ENCODE measurements at regions of chr17 and their contacts with region 1.

Region 1: DNA sequence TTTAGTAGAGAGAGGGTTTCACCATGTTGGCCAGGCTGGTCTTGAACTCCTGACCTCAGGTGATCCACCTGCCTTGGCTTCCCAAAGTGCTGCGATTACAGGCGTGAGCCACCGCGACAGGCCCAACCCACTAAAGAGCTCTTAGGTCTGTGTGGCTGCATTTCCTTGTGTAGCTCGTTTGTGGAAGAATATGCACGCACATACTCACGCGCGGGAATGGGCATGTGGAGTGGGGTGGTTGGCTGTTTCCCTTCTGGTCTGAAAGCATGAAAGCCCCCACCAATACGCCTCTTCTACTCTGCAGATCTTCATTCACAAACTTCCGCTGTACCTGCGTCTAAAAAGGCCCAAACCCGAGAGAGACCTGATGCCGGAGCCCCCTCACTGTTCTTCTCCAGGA is 10.1 kb downstream of the CHRNB1 start:
- DNase-seq: no peak
- H3K4me3 ChIP-seq: peak overlapping the region in 2 of 3 experiments; percentile 60 to 61
- H3K27ac ChIP-seq: no peak overlapping the region
- H3K4me1 ChIP-seq: peaks cover 20% of the 10 kb centered on the region
- H3K27me3 ChIP-seq: no peaks in the 10 kb centered on the region
- CTCF ChIP-seq: no peak

Region 2: DNA sequence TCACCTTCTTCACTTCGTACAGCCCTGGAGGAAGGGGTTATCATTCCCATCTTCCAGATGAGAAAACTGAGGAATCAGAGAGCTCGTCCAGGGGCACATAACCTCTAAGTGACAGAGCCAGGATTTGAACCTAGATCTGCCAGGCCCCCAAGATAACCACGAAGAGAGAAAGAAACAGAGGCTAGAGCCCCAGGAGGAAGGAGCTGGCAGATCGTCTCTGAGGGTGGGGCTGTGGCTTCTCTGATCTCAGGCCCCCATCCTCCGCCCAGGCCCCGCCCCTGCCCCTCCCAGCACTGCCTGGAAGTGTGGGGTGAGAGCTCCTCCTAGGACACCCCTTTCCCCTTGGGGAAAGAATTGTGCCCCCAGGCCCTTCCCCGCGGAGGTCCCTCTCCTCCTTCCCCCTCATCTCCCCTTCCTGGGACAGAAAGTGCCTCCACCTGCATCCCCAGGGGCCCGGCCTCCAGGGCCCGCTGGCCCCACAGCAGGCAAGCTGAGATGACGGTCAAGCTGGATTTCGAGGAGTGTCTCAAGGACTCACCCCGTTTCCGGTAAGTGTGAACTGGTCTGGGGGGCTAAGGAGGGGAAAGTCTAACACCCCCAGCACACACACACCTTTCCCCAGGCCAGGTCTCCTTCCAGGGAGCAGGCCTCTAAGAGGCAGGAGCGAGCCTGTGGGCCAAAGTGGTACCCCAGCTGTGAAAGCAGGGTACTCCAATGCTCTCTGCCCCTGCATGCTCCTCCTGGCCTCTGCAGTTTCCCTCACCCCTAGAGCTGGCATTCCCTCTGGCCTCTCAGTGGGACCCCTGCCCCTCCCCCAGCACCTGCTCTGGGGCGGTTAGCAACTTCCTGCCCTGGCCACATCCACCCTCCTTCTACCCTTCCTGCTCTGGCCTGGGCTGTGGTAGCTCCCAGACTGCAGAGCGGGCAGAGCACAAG is 118.5 kb before region 1 on chr17 and contains the start of gene ACAP1:
- CTCF ChIA-PET with region 1: no interaction called
- dilution Hi-C with region 1: no loop called
- in situ Hi-C with region 1: no loop called
- intact Hi-C with region 1: no loop called
- DNase-seq: no peak
- H3K4me3 ChIP-seq: no peak within 1 kb of the TSS
- H3K27ac ChIP-seq: no peak within 1 kb of the TSS
- H3K4me1 ChIP-seq: no peaks in the 10 kb centered on the region
- H3K27me3 ChIP-seq: peaks cover 3% of the 10 kb centered on the region
- CTCF ChIP-seq: no peak
- total RNA-seq, gene ACAP1: 2.0 to 4.7 TPM

Region 3: DNA sequence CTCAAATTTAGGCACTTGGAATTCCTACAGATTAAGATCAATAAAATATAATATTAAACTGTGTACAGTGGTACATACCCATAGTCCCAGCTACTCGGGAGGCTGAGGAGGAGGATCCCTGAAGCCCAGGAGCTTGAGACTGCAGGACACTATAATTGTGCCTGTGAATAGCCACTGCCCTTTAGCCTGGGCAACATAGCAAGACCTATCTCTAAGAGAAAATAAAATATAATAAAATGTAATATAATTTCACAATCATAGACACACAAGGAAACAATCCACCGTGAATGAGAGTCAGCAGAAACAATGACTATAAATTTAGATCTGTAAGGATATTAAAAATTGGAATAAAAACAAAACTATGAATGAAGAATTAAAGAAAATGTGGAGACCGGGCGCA is 84.1 kb before region 1 on chr17:
- CTCF ChIA-PET with region 1: interaction called, 10 read pairs
- dilution Hi-C with region 1: no loop called
- in situ Hi-C with region 1: no loop called
- intact Hi-C with region 1: no loop called
- DNase-seq: no peak
- H3K4me3 ChIP-seq: no peak overlapping the region
- H3K27ac ChIP-seq: no peak overlapping the region
- H3K4me1 ChIP-seq: no peaks in the 10 kb centered on the region
- H3K27me3 ChIP-seq: no peaks in the 10 kb centered on the region
- CTCF ChIP-seq: no peak

Region 4: GRCh38 chr17:7703584-7704479 is 248.9 kb after region 1 on chr17:
- CTCF ChIA-PET with region 1: no interaction called
- dilution Hi-C with region 1: no loop called
- in situ Hi-C with region 1: no loop called
- intact Hi-C with region 1: no loop called
- DNase-seq: peak; percentile 32
- H3K4me3 ChIP-seq: no peak overlapping the region
- H3K27ac ChIP-seq: no peak overlapping the region
- H3K4me1 ChIP-seq: peaks cover 12% of the 10 kb centered on the region
- H3K27me3 ChIP-seq: no peaks in the 10 kb centered on the region
- CTCF ChIP-seq: no peak